Caco-2 (cell line): ENCODE measurements at regions of chr7 and their contacts with region 1.

Region 1: DNA sequence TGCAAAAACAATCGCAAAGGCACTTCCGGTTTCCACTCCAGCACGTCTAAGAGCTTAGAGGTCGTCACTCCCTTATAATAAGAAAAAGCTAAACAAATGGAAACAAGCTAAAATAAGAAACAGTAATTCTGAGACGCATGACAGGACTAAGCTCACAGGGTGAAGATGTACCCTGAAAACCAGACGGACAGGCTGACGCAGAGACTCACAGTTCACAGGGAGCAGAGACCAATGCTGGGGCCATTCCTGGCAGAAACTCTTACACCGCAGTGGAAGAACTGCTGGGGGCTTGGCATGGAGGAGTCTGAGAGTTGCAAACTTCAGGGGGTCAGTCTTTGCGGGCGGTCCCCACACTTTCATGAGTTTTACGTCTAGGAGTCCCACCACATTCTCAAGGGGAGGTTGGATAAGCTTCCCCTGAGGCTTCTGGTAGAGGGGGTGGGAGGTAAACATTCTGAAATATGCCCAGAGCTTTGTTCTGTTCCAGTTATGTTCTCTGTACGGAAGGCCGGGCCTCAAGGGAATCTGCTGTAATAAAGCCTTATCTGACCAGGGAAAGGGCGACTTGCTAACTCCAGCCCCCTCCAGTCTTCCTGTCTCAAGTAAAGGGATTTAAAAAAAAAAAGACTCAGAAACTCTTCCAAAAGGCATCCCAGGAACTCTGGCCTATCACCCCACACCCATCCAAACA is 47.8 kb downstream of the BRI3 start:
- DNase-seq: peak; percentile 78 to 88
- H3K4me3 ChIP-seq: no peak overlapping the region
- H3K4me3 Mint-ChIP-seq: peak overlapping the region; percentile 70
- H3K27ac Mint-ChIP-seq: peak overlapping the region; percentile 93
- H3K4me1 ChIP-seq: peaks cover 31% of the 10 kb centered on the region
- H3K4me1 Mint-ChIP-seq: peaks cover 41% of the 10 kb centered on the region
- H3K27me3 ChIP-seq: no peaks in the 10 kb centered on the region
- H3K27me3 Mint-ChIP-seq: no peaks in the 10 kb centered on the region
- CTCF ChIP-seq: no peak

Region 2: DNA sequence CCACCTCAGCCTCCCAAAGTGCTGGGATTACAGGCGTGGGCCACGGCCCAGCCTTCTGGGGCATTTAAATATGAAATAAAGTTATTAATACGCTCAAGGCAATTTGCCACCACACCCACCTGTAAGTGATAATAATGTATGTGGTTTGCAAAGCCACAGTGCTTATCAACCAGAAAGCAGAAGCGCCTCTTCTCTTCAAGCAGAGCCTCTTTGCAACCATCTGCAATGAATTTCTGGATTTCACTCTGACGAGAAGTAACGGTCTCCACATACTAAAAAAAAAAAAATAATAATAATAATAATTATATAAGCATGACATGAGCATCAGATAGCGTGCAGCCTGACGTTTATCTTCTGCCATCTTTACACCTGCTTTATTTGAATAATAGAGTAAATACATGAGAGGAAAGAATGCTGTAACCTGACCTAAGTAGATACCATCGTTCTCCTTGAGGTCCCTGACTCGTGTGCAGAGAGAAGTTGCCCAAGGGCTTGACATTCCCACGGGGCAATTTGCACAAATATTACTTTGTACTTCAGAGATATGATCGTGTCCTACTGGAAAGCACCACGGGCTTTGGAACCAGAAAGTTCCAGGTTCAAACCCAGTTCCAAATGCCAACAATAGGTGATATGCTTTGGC is 13.8 kb before region 1 on chr7:
- CTCF ChIA-PET with region 1: no interaction called
- POLR2A ChIA-PET with region 1: no interaction called
- intact Hi-C with region 1: no loop called
- DNase-seq: peak; percentile 54 to 55
- H3K4me3 ChIP-seq: no peak overlapping the region
- H3K4me3 Mint-ChIP-seq: no peak overlapping the region
- H3K27ac Mint-ChIP-seq: peak overlapping the region; percentile 74
- H3K4me1 ChIP-seq: peaks cover 19% of the 10 kb centered on the region
- H3K4me1 Mint-ChIP-seq: peaks cover 22% of the 10 kb centered on the region
- H3K27me3 ChIP-seq: no peaks in the 10 kb centered on the region
- H3K27me3 Mint-ChIP-seq: no peaks in the 10 kb centered on the region
- CTCF ChIP-seq: no peak

Region 3: GRCh38 chr7:98354511-98355257 is 25.4 kb after region 1 on chr7:
- CTCF ChIA-PET with region 1: no interaction called
- POLR2A ChIA-PET with region 1: interaction called, 3 read pairs
- intact Hi-C with region 1: loop called (anchors 1 kb)
- DNase-seq: peak; percentile 79 to 89
- H3K4me3 ChIP-seq: no peak overlapping the region
- H3K4me3 Mint-ChIP-seq: peak overlapping the region; percentile 42
- H3K27ac Mint-ChIP-seq: peak overlapping the region; percentile 65
- H3K4me1 ChIP-seq: peaks cover 36% of the 10 kb centered on the region
- H3K4me1 Mint-ChIP-seq: peaks cover 19% of the 10 kb centered on the region
- H3K27me3 ChIP-seq: no peaks in the 10 kb centered on the region
- H3K27me3 Mint-ChIP-seq: no peaks in the 10 kb centered on the region
- CTCF ChIP-seq: no peak